Aorta (tissue), 5 donors: ENCODE measurements at regions of chr3 and their contacts with region 1.

Region 1: GRCh38 chr3:170277833-170278580 is 55.8 kb downstream of the PRKCI start:
- DNase-seq: no peak
- ATAC-seq: no peak
- H3K4me3 ChIP-seq: no peak overlapping the region
- H3K27ac ChIP-seq: no peak overlapping the region
- H3K4me1 ChIP-seq: no peaks in the 10 kb centered on the region
- H3K27me3 ChIP-seq: no peaks in the 10 kb centered on the region

Region 2: GRCh38 chr3:170189398-170190256 is 88.4 kb before region 1 on chr3:
- intact Hi-C with region 1: loop called in 1 of 2 experiments (anchors 10 kb)
- DNase-seq: no peak
- ATAC-seq: no peak
- H3K4me3 ChIP-seq: peak overlapping the region in 1 of 2 donors; percentile 26
- H3K27ac ChIP-seq: no peak overlapping the region
- H3K4me1 ChIP-seq: peaks cover 0 to 3% of the 10 kb centered on the region in 2 donors
- H3K27me3 ChIP-seq: no peaks in the 10 kb centered on the region

Region 3: DNA sequence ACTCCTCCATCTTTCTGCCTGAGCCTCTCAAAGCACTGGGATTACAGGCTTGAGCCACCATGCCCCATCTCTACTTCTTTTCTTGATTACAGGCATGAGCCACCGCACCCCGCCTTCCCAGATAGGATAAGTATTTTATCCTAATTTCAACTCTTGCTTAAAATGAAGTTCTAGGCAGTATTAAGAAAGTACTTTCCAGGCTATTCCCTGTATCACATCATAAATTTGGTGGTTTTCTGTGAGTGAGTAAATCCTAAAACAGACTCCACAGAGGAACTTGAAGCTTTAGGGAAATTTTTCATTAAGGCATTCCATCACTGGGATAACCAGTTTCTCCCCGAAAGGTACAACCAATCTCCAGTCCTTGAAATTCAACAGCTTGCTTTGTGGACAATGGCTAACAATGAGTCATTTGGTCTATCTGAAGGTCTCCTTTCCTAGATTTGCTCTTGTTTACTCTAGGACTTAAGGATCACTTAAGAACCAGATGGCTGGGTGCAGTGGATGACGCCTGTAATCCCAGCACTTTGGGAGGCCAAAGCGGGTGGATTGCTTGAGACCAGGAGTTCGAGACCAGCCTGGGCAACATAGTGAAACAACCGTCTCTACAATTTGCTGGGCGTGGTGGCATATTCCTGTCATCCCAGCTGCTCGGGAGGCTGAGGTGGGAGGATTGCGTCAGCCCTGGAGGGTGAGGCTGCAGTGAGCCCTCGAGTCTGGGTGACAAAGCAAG is 29.8 kb after region 1 on chr3:
- intact Hi-C with region 1: no loop called
- DNase-seq: no peak
- ATAC-seq: no peak
- H3K4me3 ChIP-seq: no peak overlapping the region
- H3K27ac ChIP-seq: no peak overlapping the region
- H3K4me1 ChIP-seq: no peaks in the 10 kb centered on the region
- H3K27me3 ChIP-seq: no peaks in the 10 kb centered on the region